RWPE1 (cell line): ENCODE measurements at regions of chr11 and their contacts with region 1.

Region 1: DNA sequence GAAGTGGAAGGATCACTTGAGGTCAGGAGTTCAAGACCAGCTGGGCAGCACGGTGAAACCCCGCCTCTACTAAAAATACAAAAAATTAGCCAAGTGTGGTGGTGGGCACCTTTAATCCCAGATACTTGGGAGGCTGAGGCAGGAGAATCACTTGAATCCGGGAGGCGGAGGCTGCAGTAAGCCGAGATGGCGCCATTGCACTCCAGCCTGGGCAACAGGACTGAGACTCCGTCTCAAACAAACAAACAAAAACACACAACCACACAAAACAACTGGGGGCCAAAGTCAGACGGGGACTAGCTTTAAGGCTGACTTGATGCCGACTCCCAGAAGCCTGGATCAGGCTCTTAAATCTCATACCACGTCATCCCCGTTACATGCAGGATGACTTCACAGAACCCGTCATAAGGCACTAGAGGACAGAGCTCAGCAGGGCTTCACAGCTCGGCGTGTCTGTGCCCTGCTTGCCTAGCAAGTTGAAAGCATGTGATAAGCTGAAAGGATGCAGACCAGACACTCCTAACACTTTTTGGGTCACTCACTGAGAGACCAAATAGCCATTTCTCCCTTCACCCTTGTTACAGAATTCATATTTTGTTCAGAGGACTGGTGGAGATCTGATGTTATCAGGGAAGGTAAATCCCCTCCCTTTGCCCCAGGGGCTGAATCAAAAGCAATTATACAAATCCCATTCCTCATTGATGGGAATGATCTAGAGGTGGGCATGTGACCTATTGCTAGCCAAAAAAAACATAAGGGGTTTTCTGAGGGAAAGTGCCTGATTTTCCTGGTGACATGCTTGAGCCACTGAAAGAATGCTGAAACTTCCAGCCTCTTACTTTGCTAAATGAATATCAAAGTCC is 65.4 kb downstream of the GAB2 start:
- DNase-seq: no peak
- H3K27ac ChIP-seq: no peak overlapping the region
- CTCF ChIP-seq: no peak

Region 2: DNA sequence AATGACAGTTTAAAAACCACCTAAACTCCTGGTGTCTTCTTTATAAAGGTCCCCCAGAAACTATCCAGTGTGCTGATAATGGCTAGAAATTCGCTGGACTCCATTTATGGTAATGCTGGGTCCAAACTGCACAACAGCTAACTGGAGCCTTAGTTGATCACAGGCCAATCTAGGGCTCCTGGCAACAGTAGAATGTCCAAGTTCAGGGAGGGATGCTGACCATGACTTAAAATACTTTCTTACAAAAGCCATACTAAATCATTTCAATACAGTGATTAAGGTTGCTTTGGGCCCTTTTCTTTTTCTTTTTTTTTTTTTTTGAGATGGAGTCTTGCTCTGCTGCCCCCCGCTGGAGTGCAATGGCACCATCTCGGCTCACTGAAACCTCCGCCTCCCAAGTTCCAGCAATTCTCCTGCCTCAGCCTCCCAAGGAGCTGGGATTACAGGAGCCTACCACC is 79.9 kb after region 1 on chr11:
- CTCF ChIA-PET with region 1: interaction called, 11 read pairs
- POLR2A ChIA-PET with region 1: no interaction called
- DNase-seq: no peak
- H3K27ac ChIP-seq: no peak overlapping the region
- CTCF ChIP-seq: peak; percentile 41